Gastrocnemius medialis (tissue), 4 donors: ENCODE measurements at regions of chr19 and their contacts with region 1.

Region 1: DNA sequence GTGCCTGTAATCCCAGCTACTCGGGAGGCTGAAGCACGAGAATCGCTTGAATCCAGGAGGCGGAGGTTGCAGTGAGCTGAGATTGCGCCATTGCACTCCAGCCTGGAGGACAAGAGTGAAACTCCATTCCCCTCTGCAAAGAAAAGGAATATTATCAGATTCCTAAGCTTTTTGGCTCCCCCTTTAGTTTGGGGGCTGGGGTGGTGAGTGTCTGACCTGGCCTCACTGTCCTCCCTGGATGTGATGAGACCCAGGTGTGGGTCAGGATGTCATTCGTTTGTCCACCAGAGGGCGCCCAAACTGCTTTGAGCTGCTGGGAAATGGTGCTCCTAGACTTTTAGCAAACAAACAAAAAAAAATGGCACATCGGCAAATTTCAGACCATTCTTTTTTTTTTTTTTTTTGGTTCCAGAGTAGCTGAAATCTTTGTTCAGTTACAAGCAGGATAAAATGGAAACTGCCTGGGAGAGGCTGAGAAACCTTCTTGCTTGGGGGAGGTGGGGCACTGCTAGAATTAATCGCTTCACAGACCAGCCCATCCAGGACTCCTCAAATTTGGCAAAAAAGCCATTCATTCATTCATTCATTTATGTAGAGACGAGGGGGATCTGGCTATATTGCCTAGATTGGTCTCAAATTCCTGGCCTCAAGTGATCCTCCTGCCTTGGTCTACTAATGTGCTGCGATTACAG is 29.4 kb downstream of the SPC24 start:
- DNase-seq: peak; percentile 45 to 63
- ATAC-seq: peak; percentile 50 to 57
- H3K4me3 ChIP-seq: no peak overlapping the region
- H3K27ac ChIP-seq: no peak overlapping the region
- H3K4me1 ChIP-seq: no peaks in the 10 kb centered on the region
- H3K27me3 ChIP-seq: no peaks in the 10 kb centered on the region
- CTCF ChIP-seq: peak; percentile 69 to 75 (median 71)
- POLR2A ChIP-seq: no peak

Region 2: GRCh38 chr19:10936661-10937084 is 189.5 kb before region 1 on chr19:
- in situ Hi-C with region 1: loop called in 2 of 4 experiments (anchors 10 kb)
- intact Hi-C with region 1: loop called (anchors 10 kb)
- DNase-seq: no peak
- ATAC-seq: peak; percentile 88 to 92
- H3K4me3 ChIP-seq: no peak overlapping the region
- H3K27ac ChIP-seq: no peak overlapping the region
- H3K4me1 ChIP-seq: peaks cover 0 to 6% of the 10 kb centered on the region in 2 donors
- H3K27me3 ChIP-seq: no peaks in the 10 kb centered on the region
- CTCF ChIP-seq: peak; percentile 42 to 65 (median 60)
- POLR2A ChIP-seq: no peak

Region 3: GRCh38 chr19:11203194-11204075 is 77.3 kb after region 1 on chr19:
- in situ Hi-C with region 1: loop called in 2 of 4 experiments (anchors 5 kb)
- intact Hi-C with region 1: no loop called
- DNase-seq: peak in 1 of 2 donors; percentile 51
- ATAC-seq: peak; percentile 43 to 76
- H3K4me3 ChIP-seq: peak overlapping the region; percentile 8 to 37 (median 30)
- H3K27ac ChIP-seq: peak overlapping the region; percentile 69 to 75 (median 74)
- H3K4me1 ChIP-seq: peaks cover 9 to 14% of the 10 kb centered on the region in 2 donors
- H3K27me3 ChIP-seq: no peaks in the 10 kb centered on the region
- CTCF ChIP-seq: peak; percentile 67 to 95 (median 85)
- POLR2A ChIP-seq: no peak